PC-9 (cell line): ENCODE measurements at regions of chr17 and their contacts with region 1.

Region 1: GRCh38 chr17:27332485-27333409 is 38.8 kb downstream of the WSB1 start:
- DNase-seq: peak; percentile 96 to 98
- H3K4me3 ChIP-seq: peak overlapping the region; percentile 62
- H3K27ac ChIP-seq: peak overlapping the region; percentile 76
- H3K4me1 ChIP-seq: peaks cover 24% of the 10 kb centered on the region
- H3K27me3 ChIP-seq: no peaks in the 10 kb centered on the region
- CTCF ChIP-seq: peak; percentile 81

Region 2: DNA sequence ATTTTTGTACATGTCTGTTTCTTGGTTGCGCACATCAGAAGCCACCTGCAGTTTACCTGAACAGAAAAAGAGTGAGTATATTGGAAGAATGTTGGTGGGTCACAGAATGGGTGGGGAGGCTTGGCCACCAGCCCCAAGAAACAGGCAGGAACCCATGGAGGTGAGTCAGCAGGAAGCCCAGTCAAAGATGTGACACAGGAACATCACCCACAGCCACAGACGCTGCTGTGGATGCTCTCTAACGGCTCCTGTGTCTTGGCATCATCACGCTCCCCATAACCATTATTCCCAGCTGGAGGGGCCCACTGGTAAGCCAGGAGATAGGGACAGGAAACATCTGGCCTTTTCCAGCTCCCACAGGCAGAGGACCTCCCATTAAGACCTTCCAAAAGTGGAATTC is 132.8 kb before region 1 on chr17:
- CTCF ChIA-PET with region 1: no interaction called
- POLR2A ChIA-PET with region 1: no interaction called
- intact Hi-C with region 1: loop called (anchors 1 kb)
- DNase-seq: no peak
- H3K4me3 ChIP-seq: no peak overlapping the region
- H3K27ac ChIP-seq: no peak overlapping the region
- H3K4me1 ChIP-seq: peaks cover 11% of the 10 kb centered on the region; the same call in 1 of the 2 replicates
- H3K27me3 ChIP-seq: no peaks in the 10 kb centered on the region
- CTCF ChIP-seq: no peak

Region 3: DNA sequence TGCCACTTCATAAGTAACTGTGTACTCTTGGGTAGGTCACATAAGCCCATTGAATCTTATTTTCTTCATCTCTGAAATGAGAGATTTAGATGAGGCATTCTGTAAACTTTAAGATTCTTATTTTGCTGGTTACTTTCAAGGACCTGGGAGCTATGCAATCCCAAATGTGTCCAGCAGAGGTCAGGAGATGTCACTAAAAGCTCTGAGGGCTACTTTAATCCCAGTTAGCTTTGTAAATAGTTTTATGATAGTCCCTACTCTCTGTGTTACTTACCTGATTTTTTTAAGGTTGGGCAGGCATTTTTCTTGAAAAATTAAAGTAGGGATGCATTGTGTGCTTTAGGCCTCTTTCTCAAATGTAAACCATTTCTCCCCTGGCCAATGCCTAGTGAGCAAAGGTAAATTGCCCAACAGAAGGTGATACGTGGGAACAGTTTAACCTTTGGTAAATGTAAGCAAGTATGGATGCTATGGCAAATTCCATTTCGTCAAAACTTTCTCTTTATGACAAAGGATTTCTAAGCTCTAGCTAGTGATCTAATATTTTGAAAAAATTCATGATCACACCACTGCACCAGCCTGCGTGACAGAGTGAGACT is 95.9 kb before region 1 on chr17:
- CTCF ChIA-PET with region 1: interaction called, 26 read pairs
- POLR2A ChIA-PET with region 1: no interaction called
- intact Hi-C with region 1: loop called (anchors 1 kb)
- DNase-seq: peak; percentile 61 to 68
- H3K4me3 ChIP-seq: no peak overlapping the region
- H3K27ac ChIP-seq: no peak overlapping the region
- H3K4me1 ChIP-seq: peaks cover 34% of the 10 kb centered on the region
- H3K27me3 ChIP-seq: no peaks in the 10 kb centered on the region
- CTCF ChIP-seq: peak; percentile 93

Region 4: DNA sequence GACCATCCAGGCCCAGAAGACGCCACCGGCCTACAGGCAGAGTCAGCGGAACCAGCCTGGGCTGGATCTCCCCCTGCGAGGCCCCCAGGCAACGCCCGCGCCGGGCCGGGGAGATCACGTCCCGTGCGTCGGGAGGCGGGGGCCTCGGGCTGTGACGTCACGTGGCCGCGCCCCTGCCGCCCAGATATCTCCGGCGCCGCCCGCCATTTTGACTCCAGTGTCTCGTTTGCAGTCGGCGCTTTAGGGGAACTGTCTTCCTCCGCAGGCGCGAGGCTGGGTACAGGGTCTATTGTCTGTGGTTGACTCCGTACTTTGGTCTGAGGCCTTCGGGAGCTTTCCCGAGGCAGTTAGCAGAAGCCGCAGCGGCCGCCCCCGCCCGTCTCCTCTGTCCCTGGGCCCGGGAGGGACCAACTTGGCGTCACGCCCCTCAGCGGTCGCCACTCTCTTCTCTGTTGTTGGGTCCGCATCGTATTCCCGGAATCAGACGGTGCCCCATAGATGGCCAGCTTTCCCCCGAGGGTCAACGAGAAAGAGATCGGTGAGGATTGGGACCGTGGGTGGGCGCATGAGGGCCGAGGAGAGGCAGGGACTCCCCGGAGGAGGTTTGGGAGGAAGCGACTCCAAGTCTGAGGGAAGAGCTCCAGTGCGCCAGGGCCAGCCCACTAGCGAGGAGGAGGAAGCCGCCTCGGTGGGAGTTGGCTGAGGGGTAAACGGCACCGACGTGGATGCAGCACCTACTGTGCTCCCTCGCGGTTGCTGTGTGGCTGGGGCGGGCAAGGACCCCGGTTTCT is 38.7 kb before region 1 on chr17 and contains the start of gene WSB1:
- CTCF ChIA-PET with region 1: interaction called, 6 read pairs
- POLR2A ChIA-PET with region 1: interaction called, 6 read pairs
- intact Hi-C with region 1: loop called (anchors 5 kb)
- DNase-seq: peak; percentile 61 to 84
- H3K4me3 ChIP-seq: peak within 1 kb of the TSS; percentile 99
- H3K27ac ChIP-seq: peak within 1 kb of the TSS; percentile 88
- H3K4me1 ChIP-seq: peaks cover 26% of the 10 kb centered on the region
- H3K27me3 ChIP-seq: no peaks in the 10 kb centered on the region
- CTCF ChIP-seq: no peak; the same call in 1 of the 2 replicates
- total RNA-seq, gene WSB1: 66.2 and 101 TPM in 2 replicates